A673 (cell line): ENCODE measurements at regions of chr3 and their contacts with region 1.

Region 1: GRCh38 chr3:5426094-5426883 is 238.8 kb downstream of the EDEM1 start:
- DNase-seq: peak; percentile 83
- H3K4me3 ChIP-seq: no peak overlapping the region
- H3K27ac ChIP-seq: no peak overlapping the region
- H3K4me1 ChIP-seq: no peaks in the 10 kb centered on the region
- H3K27me3 ChIP-seq: no peaks in the 10 kb centered on the region
- CTCF ChIP-seq: peak; percentile 93

Region 2: DNA sequence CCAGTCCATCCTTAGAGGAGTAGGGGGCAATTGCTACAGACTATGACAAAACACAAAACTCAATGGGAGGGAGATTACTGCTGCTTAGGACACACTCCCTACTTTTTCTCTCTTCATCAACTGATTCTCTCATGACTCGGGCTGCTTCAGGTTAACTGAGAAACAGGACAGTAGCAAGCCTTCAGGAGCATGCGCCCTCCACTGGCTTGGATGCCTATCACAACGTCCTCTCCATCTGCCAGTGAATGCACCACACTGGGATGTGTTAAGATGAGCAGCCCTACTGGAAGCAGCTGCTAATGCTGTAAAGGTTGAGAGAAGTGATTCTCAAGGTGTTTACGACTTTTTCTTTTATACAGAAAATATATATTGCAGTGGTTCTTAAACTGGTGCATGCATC is 303.6 kb after region 1 on chr3:
- CTCF ChIA-PET with region 1: no interaction called
- POLR2A ChIA-PET with region 1: no interaction called
- intact Hi-C with region 1: loop called (anchors 10 kb)
- DNase-seq: no peak
- H3K4me3 ChIP-seq: no peak overlapping the region
- H3K27ac ChIP-seq: no peak overlapping the region
- H3K4me1 ChIP-seq: no peaks in the 10 kb centered on the region
- H3K27me3 ChIP-seq: peaks cover 78% of the 10 kb centered on the region
- CTCF ChIP-seq: no peak

Region 3: DNA sequence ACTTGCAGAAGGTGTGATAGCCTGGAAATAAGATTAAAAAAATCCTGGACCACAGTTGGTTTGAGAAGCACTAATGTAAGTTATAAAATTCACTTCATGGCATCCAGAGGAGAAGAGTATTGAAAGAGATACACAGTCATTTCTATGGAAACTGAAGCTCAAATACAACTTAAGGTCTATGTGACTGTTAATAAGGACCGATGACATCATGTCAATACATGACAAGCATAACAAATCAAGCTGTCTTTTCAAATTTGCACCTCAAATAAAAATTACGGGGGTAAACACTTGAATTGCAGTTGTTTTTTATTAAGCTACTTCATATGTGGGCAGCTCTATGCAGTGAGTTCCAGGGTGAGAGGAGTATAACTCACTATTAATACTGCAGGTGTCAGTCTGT is 959.5 kb after region 1 on chr3:
- CTCF ChIA-PET with region 1: no interaction called
- POLR2A ChIA-PET with region 1: no interaction called
- intact Hi-C with region 1: no loop called
- DNase-seq: no peak
- H3K4me3 ChIP-seq: no peak overlapping the region
- H3K27ac ChIP-seq: no peak overlapping the region
- H3K4me1 ChIP-seq: no peaks in the 10 kb centered on the region
- H3K27me3 ChIP-seq: no peaks in the 10 kb centered on the region
- CTCF ChIP-seq: no peak

Region 4: GRCh38 chr3:6697722-6698121 is 1271.4 kb after region 1 on chr3:
- CTCF ChIA-PET with region 1: interaction called, 11 read pairs
- POLR2A ChIA-PET with region 1: no interaction called
- intact Hi-C with region 1: no loop called
- DNase-seq: no peak
- H3K4me3 ChIP-seq: no peak overlapping the region
- H3K27ac ChIP-seq: no peak overlapping the region
- H3K4me1 ChIP-seq: no peaks in the 10 kb centered on the region
- H3K27me3 ChIP-seq: no peaks in the 10 kb centered on the region
- CTCF ChIP-seq: no peak